GM10248 (cell line): ENCODE measurements at regions of chr16 and their contacts with region 1.

Region 1: GRCh38 chr16:27235055-27235937 is 32.0 kb downstream of the KDM8 start:
- DNase-seq: peak; percentile 68
- CTCF ChIP-seq: peak; percentile 84

Region 2: DNA sequence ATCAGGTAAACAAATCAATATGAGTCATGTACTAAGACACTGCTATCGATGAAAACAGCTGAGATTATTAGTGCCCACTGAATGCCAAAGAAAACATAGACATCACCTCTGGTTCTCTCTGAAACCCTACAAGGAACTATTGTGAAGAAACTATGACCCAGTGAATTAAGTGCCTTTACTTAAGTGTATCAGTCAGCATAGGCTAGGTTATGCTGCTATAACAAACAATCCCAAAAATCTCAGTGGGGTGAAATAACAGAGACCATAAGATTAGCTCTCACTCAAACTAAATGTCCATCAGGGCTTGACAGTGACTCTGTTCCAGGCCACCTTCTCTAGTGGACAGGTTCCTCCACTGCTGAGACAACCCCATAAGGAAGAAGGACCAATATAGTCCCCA is 89.7 kb before region 1 on chr16:
- CTCF ChIA-PET with region 1: no interaction called
- POLR2A ChIA-PET with region 1: no interaction called
- DNase-seq: no peak
- CTCF ChIP-seq: no peak

Region 3: GRCh38 chr16:27208796-27209195 is 26.5 kb before region 1 on chr16:
- CTCF ChIA-PET with region 1: interaction called, 31 read pairs
- POLR2A ChIA-PET with region 1: no interaction called
- DNase-seq: no peak
- CTCF ChIP-seq: no peak

Region 4: GRCh38 chr16:27291722-27292240 is 56.5 kb after region 1 on chr16:
- CTCF ChIA-PET with region 1: interaction called, 12 read pairs
- POLR2A ChIA-PET with region 1: no interaction called
- DNase-seq: no peak
- CTCF ChIP-seq: no peak

Region 5: GRCh38 chr16:27367461-27368357 is 132.4 kb after region 1 on chr16:
- CTCF ChIA-PET with region 1: interaction called, 87 read pairs
- POLR2A ChIA-PET with region 1: interaction called, 4 read pairs
- DNase-seq: peak; percentile 86
- CTCF ChIP-seq: peak; percentile 69

Region 6: GRCh38 chr16:27449434-27450195 is 214.3 kb after region 1 on chr16:
- CTCF ChIA-PET with region 1: interaction called, 38 read pairs
- POLR2A ChIA-PET with region 1: no interaction called
- DNase-seq: peak; percentile 86
- CTCF ChIP-seq: no peak

Region 7: GRCh38 chr16:27566417-27566816 is 331.1 kb after region 1 on chr16:
- CTCF ChIA-PET with region 1: no interaction called
- POLR2A ChIA-PET with region 1: no interaction called
- DNase-seq: no peak
- CTCF ChIP-seq: no peak